Activated CD4-positive, alpha-beta memory T cell treated with anti-CD3 and anti-CD28 coated beads for 36 hours (primary cell): ENCODE measurements at regions of chr12 and their contacts with region 1.

Region 1: GRCh38 chr12:51047655-51048540 is at the start of gene LETMD1:
- DNase-seq: peak; percentile 95
- H3K4me3 Mint-ChIP-seq: peak within 1 kb of the TSS; percentile 97
- H3K27ac Mint-ChIP-seq: peak within 1 kb of the TSS; percentile 96
- H3K4me1 Mint-ChIP-seq: peaks cover 31% of the 10 kb centered on the region
- H3K27me3 Mint-ChIP-seq: no peaks in the 10 kb centered on the region
- total RNA-seq, gene LETMD1: 79.8 to 84.0 TPM

Region 2: GRCh38 chr12:51172515-51173431 is 124.9 kb after region 1 on chr12 and contains the start of gene TFCP2:
- CTCF ChIA-PET with region 1: no interaction called
- POLR2A ChIA-PET with region 1: no interaction called
- intact Hi-C with region 1: loop called (anchors 1 kb)
- DNase-seq: peak; percentile 96
- H3K4me3 Mint-ChIP-seq: peak within 1 kb of the TSS; percentile 63
- H3K27ac Mint-ChIP-seq: no peak within 1 kb of the TSS
- H3K4me1 Mint-ChIP-seq: peaks cover 9% of the 10 kb centered on the region
- H3K27me3 Mint-ChIP-seq: no peaks in the 10 kb centered on the region
- total RNA-seq, gene TFCP2: 32.0 to 34.1 TPM

Region 3: GRCh38 chr12:51326762-51327439 is 279.0 kb after region 1 on chr12:
- CTCF ChIA-PET with region 1: no interaction called
- POLR2A ChIA-PET with region 1: no interaction called
- intact Hi-C with region 1: loop called (anchors 5 kb)
- DNase-seq: no peak
- H3K4me3 Mint-ChIP-seq: peak overlapping the region; percentile 52
- H3K27ac Mint-ChIP-seq: peak overlapping the region; percentile 90
- H3K4me1 Mint-ChIP-seq: peaks cover 64% of the 10 kb centered on the region
- H3K27me3 Mint-ChIP-seq: no peaks in the 10 kb centered on the region